BJ (cell line): ENCODE measurements at regions of chr20 and their contacts with region 1.

Region 1: GRCh38 chr20:47272893-47273590 is 83.5 kb downstream of the ZMYND8 start:
- DNase-seq: no peak
- H3K4me3 ChIP-seq: no peak overlapping the region
- H3K27me3 ChIP-seq: no peaks in the 10 kb centered on the region
- CTCF ChIP-seq: peak; percentile 80

Region 2: GRCh38 chr20:47139857-47140535 is 133.0 kb before region 1 on chr20:
- CTCF ChIA-PET with region 1: no interaction called
- POLR2A ChIA-PET with region 1: no interaction called
- DNase-seq: no peak
- H3K4me3 ChIP-seq: no peak overlapping the region
- H3K27me3 ChIP-seq: no peaks in the 10 kb centered on the region
- CTCF ChIP-seq: no peak

Region 3: GRCh38 chr20:47205577-47206498 is 67.2 kb before region 1 on chr20:
- CTCF ChIA-PET with region 1: interaction called, 17 read pairs
- POLR2A ChIA-PET with region 1: no interaction called
- DNase-seq: no peak
- H3K4me3 ChIP-seq: no peak overlapping the region
- H3K27me3 ChIP-seq: no peaks in the 10 kb centered on the region
- CTCF ChIP-seq: peak; percentile 92

Region 4: DNA sequence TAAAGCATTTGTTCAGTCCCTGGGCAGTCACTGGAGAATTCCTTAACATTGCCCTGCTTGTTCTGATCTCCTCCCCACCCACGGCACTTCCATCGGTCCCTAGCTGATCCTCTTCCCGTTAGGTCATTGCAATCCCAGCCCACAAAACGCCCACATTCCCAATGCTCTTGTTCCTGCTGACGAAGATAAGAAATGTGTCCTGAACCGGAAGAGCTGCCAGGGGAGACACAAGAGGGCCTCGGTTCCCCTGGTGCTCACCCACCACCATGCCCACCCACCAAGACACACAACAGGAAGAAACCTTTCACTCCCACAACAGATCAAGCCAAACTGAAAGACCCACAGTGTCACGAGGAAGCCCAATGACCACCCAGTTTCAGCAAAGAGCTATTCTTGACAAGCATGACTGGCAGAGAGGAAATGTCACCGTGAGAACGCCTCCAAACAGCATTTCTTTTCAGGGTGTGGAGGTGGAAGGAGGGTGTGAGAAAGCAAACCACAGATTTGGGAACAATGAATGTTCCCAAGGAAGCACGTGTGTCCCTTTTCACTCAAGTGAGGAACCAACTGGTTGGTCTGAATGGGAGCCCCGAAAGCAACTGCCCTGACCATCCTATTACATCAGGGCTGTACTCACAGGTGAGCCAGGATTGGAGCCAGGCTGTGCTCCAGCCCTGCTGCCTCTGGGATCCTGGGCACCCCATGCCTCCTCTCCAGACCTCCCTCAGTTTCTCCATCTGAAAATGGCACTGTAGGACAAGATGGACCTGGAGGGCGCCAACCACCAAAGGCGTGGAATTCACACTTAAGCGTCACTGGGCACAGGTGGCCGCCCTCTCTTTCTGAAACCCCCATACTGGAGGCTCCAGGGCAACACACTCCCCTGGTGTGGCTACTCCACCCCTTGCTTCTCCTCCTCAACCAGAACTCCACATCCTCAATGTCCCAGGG is 14.0 kb before region 1 on chr20:
- CTCF ChIA-PET with region 1: interaction called, 11 read pairs
- POLR2A ChIA-PET with region 1: no interaction called
- DNase-seq: no peak
- H3K4me3 ChIP-seq: no peak overlapping the region
- H3K27me3 ChIP-seq: no peaks in the 10 kb centered on the region
- CTCF ChIP-seq: no peak

Region 5: DNA sequence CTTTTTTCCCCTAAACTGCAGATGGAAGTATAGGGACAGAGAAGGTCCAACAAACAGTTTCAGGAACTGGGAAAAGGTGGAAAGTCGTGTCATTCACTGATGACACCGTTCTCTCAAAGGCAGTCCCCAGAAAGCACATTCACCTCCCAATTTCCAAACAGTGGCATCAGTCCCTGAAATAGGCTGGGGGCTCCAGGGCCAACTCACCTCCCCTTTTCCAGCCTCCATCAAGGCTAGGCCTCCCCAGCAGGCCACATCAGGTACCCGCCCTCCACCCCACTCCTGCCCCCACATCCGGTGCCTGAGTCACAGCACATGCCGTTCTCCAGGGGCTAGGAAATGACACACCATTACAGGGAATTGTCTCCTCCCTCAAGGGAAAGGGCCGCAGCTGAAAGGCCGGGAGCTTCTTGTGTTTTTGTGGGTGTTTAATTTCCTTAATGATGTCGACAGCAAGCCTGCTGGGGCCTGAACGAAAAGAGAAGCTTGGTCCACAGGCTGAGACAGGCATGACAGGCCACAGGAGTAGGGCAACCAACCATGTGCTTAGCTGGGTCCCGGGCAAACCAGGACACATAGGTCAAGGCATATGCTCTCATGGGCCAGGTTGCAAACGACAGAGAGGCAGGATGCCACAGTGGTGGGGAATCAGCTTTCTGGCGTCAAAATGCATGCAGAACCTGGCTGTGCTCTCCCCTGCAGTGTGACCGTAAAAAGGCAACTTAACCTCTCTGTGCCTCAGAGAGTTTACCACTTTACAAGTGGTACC is 44.3 kb after region 1 on chr20:
- CTCF ChIA-PET with region 1: interaction called, 4 read pairs
- POLR2A ChIA-PET with region 1: interaction called, 18 read pairs
- DNase-seq: peak; percentile 79
- H3K4me3 ChIP-seq: no peak overlapping the region
- H3K27me3 ChIP-seq: no peaks in the 10 kb centered on the region
- CTCF ChIP-seq: no peak

Region 6: DNA sequence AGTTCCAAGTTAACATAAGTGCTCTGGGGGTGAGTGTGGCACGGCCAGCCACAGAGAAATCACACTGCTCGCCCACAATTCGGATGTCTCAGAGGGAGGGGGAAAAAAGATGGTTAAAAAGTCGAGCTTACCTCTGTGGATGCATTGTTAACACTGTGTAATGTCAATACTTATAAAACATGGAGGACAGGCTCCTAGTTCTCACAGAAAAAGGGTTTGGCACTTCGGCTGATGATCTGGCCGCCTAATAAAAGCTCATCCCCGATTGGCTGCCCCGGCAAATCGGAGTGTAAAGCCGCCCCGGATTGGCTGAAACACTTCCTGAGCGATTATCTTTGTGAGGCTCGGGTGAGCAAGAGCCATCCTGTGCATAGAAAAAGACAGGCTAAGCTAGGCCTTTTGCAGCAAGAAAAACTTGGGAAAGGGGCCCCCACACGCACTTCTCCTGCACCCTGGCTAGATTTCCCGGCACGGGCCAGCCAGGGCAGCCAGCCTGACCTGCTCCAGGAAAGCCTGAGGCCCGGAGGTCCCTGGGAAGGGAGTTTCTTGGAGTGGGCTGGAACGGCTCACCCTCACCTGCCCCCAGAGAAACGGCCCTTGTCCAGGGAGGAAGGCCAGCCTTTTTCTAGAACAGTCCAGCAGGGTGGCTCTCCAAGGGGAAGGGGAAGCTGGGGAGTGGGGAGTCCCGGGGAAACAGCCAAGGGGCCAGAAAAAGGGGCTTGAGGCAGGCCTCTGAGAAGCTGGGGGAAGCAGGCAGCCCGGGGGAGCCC is 83.7 kb after region 1 on chr20 and contains the start of gene ZMYND8:
- CTCF ChIA-PET with region 1: interaction called, 26 read pairs
- POLR2A ChIA-PET with region 1: interaction called, 3 read pairs
- DNase-seq: peak; percentile 76
- H3K4me3 ChIP-seq: no peak within 1 kb of the TSS
- H3K27me3 ChIP-seq: no peaks in the 10 kb centered on the region
- CTCF ChIP-seq: no peak
- polyA plus RNA-seq, gene ZMYND8: 11.8 and 12.7 TPM in 2 replicates

Region 7: DNA sequence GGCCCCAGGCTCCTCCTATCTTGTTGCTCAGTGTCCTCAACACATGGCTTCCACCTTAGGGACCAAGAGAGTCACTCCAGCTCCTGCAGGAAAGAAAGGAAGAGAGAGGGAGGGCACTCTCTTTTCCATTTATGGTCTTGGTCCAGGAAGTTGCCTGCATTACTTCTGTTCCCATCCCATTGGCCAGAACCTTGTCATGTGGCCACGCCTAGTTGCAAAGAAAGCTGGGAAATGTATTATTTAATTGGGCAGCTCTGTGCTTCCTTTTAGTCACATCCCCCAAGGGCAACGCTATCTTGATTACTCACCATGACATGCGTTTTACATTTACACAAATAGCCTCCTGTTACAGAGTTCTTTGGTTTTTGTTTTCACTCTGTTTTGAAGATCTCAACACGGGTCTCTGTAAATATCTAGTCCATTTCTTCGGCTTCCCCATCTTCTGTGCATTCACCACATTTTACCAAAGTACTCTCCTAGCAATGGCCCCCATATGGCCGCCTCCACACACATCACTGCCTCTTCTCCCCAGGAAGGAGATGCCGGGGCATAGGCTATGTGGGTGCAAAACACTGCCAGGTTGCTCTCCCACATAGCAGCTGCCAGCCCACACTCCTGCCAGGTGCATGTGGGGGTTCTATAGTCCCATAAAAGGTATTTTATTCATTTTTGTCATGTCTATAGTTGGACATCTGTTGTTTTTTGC is 119.1 kb after region 1 on chr20:
- CTCF ChIA-PET with region 1: interaction called, 321 read pairs
- POLR2A ChIA-PET with region 1: no interaction called
- DNase-seq: peak; percentile 95
- H3K4me3 ChIP-seq: no peak overlapping the region
- H3K27me3 ChIP-seq: no peaks in the 10 kb centered on the region
- CTCF ChIP-seq: no peak

Region 8: DNA sequence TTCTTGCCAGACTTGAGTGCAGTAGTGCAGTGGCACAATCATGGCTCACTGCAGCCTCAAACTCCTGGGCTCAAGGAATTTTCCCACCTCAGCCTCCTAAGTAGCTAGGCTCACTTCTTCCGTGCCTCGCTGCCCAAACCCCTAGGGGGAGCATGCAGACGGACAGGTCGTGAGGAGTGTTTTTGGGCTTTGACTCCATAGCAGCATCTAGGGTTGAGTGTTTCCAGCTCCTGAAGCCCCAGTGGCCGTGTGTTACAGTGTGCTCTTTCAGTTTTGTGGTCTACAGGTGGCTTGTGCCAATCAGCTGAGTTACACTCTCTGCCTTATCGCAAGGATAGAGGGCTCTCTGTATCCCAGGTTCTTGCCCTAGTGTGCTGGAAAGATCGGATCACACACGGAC is 262.0 kb after region 1 on chr20:
- CTCF ChIA-PET with region 1: no interaction called
- POLR2A ChIA-PET with region 1: no interaction called
- DNase-seq: no peak
- H3K4me3 ChIP-seq: no peak overlapping the region
- H3K27me3 ChIP-seq: no peaks in the 10 kb centered on the region
- CTCF ChIP-seq: no peak